Tibial artery (tissue), 4 donors: ENCODE measurements at regions of chr2 and their contacts with region 1.

Region 1: GRCh38 chr2:9142551-9143263 is 63.9 kb upstream of the ASAP2 start:
- DNase-seq: peak; percentile 81 to 94
- H3K4me3 ChIP-seq: peak overlapping the region; percentile 21 to 28
- H3K27ac ChIP-seq: peak overlapping the region; percentile 63 to 71
- H3K4me1 ChIP-seq: peaks cover 0 to 27% (median 13%) of the 10 kb centered on the region in 4 donors
- H3K27me3 ChIP-seq: no peaks in the 10 kb centered on the region
- CTCF ChIP-seq: peak; percentile 98 to 99

Region 2: DNA sequence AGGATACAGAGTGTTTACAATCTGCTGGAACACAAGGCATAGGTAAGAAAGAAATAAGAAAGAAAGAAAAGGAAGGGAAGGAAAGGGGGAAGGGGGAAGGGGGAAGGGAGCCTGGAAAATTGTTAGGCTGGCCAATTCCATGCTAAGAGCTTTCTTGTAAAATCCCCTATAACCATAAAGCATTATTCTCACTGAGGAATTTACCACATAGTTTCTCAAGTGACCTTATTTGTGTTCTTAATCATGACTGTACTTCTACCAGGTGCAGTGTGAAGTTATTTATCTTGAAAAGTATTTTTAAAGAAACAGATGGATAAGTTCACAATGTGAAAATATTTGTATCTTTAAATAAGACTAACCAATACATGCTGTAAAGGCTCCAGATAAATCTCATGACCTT is 266.1 kb before region 1 on chr2:
- intact Hi-C with region 1: loop called (anchors 5 kb)
- DNase-seq: no peak
- H3K4me3 ChIP-seq: no peak overlapping the region
- H3K27ac ChIP-seq: no peak overlapping the region
- H3K4me1 ChIP-seq: no peaks in the 10 kb centered on the region
- H3K27me3 ChIP-seq: no peaks in the 10 kb centered on the region
- CTCF ChIP-seq: no peak

Region 3: DNA sequence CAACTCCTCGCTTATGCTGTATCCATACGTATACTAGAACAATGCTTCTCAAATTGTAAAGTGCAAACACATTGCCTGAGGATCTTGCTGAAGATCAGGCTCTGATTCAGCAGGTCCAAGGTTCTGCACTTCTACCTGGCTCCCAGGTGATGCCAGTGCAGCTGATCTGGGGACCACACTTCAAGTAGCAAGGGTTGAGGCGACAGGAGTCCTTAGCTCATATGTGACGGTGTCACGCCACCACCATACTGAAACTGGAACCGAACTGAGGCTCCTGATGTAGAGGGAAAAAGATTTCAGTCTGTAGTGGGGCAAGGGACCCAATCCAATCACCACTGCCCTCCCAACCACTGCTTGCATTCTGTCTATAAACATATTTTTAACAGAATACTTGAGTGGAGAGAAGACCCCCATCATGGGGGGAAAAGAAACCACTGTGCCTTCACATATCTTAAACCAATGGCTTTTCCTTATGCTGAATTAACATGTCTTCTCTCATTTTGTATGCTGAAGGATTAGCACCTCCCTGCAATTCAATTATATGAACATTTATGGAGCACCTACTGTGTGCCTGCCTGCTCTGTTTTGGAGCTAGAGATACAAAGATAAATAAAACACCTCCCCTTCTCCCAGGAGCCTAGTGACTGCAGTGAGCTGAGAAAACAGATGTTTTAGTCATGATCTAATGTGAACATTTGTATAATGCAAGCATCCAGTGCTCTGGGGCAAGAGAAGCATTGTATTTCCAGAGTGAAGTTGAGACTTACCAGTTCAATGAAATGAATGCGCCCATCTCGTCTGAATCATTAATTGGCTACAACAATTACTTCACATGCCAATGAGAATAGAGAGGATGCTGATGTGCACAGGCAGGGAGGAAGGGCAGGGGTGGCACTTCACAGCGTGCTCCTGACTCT is 57.3 kb after region 1 on chr2:
- intact Hi-C with region 1: loop called (anchors 5 kb)
- DNase-seq: no peak
- H3K4me3 ChIP-seq: no peak overlapping the region
- H3K27ac ChIP-seq: no peak overlapping the region
- H3K4me1 ChIP-seq: no peaks in the 10 kb centered on the region
- H3K27me3 ChIP-seq: no peaks in the 10 kb centered on the region
- CTCF ChIP-seq: no peak

Region 4: DNA sequence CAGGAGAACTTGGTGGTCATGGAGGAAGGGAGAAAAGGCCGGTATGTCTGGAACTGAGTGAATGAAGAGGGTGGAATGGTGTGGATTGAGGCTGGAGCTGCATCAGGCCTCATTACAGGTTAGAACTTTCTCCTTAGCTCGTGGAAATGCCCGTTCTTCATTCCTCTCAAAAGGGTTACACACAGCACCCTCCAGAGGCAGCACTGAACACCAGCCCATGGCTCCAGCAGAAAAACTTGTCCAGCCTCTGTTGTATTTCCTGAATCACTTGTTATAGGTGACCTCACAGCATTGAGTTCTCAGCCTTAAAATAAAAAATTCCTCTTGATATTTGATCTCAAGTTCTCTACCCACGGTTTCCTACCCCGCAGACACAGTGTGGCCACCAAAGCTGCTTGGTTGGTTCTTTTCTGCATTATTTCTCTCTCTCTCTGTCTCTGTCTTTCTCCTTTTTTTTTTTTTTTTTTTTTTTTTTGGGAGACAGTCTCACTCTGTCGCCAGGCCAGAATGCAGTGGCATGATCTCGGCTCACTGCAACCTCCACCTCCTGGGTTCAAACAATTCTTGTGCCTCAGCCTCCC is 191.0 kb after region 1 on chr2:
- intact Hi-C with region 1: loop called (anchors 2 kb)
- DNase-seq: peak; percentile 70 to 86
- H3K4me3 ChIP-seq: no peak overlapping the region
- H3K27ac ChIP-seq: peak overlapping the region; percentile 33 to 45
- H3K4me1 ChIP-seq: peaks cover 0 to 47% (median 10%) of the 10 kb centered on the region in 4 donors
- H3K27me3 ChIP-seq: no peaks in the 10 kb centered on the region
- CTCF ChIP-seq: peak; percentile 79